Cardiac septum (tissue), 1 donor: ENCODE measurements at regions of chr6 and their contacts with region 1.

Region 1: DNA sequence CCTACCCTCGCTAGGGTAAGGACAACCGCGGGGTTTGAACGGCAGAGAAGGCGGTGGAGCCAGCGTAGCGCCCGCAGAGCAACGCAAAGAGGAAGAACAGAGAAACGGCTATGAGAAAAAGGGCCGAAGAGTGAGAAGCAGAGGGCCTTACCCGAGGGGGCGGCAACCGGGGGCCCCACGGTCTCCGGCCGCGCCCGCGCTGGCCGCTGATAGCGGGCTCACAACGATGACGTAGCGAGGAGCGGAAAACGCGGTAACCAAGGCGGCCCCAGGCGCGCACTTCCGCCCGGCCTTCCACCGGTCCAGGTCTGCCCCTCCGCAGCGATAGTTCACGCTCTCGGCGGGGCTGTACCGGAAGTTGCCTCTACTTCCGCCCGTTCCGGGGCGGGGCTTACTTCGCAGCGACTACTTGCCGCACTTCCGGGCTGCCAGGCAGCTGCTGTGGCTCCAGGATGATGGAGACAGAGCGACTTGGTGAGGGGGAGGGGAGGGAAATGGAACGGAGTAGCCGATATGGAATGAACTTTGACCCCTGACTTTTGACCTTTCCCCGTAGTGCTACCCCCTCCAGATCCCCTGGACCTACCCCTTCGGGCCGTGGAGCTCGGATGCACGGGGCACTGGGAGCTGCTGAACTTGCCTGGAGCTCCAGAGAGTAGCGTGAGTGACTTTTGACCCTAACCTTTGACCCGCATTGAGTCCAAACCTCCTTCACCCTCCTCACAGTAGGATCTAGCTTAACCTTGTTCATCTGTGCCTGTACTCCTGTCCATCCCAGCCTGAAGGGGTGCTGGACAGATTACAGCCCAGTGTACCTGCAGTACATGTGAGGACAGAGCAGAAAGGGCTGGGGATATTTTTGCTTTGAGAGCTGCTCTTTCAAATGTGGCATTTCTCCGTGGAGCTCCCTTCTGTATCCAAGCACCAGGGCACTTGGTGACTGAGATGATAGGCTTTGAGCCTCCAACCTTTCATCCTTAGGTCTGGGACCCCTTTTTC is at the starts of genes NELFE and SKIC2:
- DNase-seq: peak; percentile 100
- total RNA-seq, gene NELFE: 46.7 TPM
- total RNA-seq, gene SKIC2: 33.2 TPM

Region 2: DNA sequence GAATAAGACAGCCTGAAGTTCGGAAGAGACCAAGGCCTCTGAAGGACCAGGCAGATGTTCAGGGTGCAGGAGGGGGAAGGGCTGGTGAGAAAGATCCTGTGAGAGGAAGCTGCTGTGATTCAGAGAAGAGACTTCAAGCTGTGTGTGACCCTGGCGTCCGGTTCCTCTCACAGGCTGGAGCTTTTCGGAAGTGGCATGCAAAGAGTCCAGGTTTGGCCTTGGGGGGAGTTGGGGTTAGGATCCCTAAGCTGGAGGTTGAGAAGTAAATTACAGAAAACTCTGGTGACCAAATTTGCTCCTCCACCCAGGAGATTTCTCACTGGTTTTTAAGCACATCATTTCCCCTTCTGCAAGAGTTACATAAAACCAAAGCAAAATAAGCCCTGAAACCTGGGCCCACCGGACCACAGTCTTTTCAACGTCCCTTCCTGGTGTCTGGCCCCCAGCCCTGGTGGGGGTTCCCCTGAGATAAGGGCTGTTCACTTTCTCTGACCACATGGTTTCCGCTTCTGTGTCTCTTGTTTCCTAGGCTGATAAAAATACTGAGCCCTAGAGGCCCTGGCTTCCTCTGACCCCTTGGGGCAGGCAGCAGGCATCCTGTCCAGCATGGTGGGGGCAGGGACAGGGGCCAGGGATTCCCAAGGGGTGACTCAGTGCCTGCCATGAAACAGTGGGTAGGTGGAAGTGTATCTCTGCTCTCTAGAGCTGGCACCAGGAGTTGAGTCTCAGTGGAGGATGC is 398.9 kb before region 1 on chr6:
- intact Hi-C with region 1: no loop called
- DNase-seq: peak; percentile 90

Region 3: GRCh38 chr6:31971993-31972708 is 13.1 kb after region 1 on chr6 and contains the start of gene DXO:
- intact Hi-C with region 1: loop called (anchors 1 kb)
- DNase-seq: peak; percentile 97
- total RNA-seq, gene DXO: 14.0 TPM